Activated T-helper 1 cell treated with anti-CD3 and anti-CD28 coated beads, Interleukin-12 subunit alpha, Interleukin-12 subunit beta, Interleukin-2, Interleukin-4 antibody, amounts not matched to agents 30 ng/mL and 10 ng/mL and 1 ng/mL, durations not matched to agents 14 hours and 24 hours and 36 hours (primary cell): ENCODE measurements at regions of chr6 and their contacts with region 1.

Region 1: GRCh38 chr6:87174078-87174579 is 18.8 kb downstream of the ZNF292 start:
- DNase-seq: no peak
- H3K4me3 Mint-ChIP-seq: no peak overlapping the region
- H3K27ac Mint-ChIP-seq: peak overlapping the region; percentile 64
- H3K4me1 Mint-ChIP-seq: peaks cover 75% of the 10 kb centered on the region
- H3K27me3 Mint-ChIP-seq: no peaks in the 10 kb centered on the region

Region 2: GRCh38 chr6:87164004-87164403 is 10.1 kb before region 1 on chr6:
- intact Hi-C with region 1: loop called (anchors 1 kb)
- DNase-seq: no peak
- H3K4me3 Mint-ChIP-seq: no peak overlapping the region
- H3K27ac Mint-ChIP-seq: peak overlapping the region; percentile 37
- H3K4me1 Mint-ChIP-seq: peaks cover 67% of the 10 kb centered on the region
- H3K27me3 Mint-ChIP-seq: no peaks in the 10 kb centered on the region